CD4-positive, alpha-beta T cell (primary cell): ENCODE measurements at regions of chr9 and their contacts with region 1.

Region 1: DNA sequence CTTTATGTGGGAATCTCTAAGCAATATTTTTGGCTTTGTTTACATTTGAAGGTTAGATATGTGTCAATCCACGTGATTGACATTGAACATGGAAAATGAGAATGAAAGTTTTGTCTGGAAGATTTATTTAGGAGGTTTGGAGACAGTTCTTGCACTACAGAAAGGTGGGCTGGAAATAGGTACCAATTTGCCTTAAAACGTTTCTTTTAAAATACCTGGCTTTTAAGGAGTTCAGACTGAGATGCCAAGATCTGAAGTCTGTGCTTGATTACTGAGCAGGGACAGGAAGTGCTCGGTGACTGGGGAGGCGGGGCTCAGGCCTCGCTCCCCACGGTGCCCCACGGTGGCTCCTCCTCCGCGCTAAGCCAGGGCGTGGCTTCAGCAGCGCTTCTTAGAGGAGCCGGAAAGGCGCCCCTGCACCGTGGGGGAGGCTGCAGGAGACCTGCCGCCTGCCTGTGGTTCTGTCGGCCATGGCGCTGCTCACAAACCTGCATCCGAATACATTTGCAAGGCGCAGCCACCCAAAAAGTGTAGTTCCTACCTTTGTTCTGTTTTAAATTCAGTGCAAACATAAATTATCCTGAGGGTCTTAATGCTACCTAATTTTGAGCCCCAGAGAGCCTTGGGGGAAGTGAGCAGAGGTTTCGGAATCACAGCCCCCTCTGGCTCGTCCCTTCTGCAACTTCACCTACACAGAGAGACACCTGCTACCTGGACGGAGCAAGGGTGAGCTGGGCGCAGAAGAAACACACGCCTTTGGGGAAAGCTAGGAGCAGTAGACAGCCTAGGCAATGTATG is 49.2 kb downstream of the USP20 start:
- DNase-seq: peak; percentile 93 to 99 (median 97)
- ATAC-seq: peak; percentile 55
- H3K4me3 ChIP-seq: peak overlapping the region; percentile 69
- H3K4me3 Mint-ChIP-seq: peak overlapping the region; percentile 96
- H3K27ac ChIP-seq: peak overlapping the region; percentile 91 to 99
- H3K27ac Mint-ChIP-seq: peak overlapping the region; percentile 99
- H3K4me1 ChIP-seq: peaks cover 72% of the 10 kb centered on the region
- H3K4me1 Mint-ChIP-seq: peaks cover 53% of the 10 kb centered on the region
- H3K27me3 ChIP-seq: no peaks in the 10 kb centered on the region
- H3K27me3 Mint-ChIP-seq: no peaks in the 10 kb centered on the region
- CTCF ChIP-seq: peak; percentile 31

Region 2: DNA sequence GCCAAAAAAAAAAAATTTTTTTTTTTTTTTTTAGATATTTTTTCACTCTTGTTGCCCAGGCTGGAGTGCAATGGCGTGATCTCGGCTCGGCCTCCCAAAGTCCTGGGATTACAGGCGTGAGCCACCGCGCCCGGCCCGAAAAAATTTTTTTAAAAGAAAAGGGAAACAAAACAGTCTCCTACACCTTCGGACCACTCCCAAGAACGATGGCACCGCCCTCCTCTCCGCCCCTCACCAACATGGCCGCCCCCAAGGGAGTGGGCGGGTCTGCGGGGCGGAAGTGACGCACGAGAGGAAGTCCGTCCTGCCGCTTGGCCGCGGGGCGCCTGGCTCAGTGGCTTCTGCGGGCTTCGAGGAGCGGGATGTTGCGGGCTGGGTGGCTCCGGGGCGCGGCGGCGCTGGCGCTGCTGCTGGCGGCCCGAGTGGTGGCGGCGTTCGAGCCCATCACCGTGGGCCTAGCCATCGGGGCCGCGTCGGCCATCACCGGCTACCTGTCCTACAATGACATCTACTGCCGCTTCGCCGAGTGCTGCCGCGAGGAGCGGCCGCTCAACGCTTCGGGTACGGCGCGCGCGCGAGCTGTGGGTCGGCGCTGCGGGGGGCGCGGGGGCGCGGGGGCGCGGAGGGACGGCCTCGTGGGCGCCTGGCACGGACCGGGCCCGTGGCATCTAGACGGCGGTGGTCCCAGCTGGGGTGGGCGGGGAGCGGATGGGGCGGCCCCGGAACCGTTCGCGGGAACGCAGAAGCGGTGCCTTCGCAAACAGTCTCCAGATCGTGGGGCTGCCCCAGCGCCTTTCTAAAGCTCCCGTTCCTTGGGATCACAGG is 81.4 kb before region 1 on chr9 and contains the start of gene TOR1B:
- CTCF ChIA-PET with region 1: no interaction called
- POLR2A ChIA-PET with region 1: interaction called, 10 read pairs
- intact Hi-C with region 1: no loop called
- DNase-seq: peak; percentile 87 to 97 (median 94)
- ATAC-seq: peak; percentile 92
- H3K4me3 ChIP-seq: peak within 1 kb of the TSS; percentile 81
- H3K4me3 Mint-ChIP-seq: peak within 1 kb of the TSS; percentile 91
- H3K27ac ChIP-seq: peak within 1 kb of the TSS; percentile 49 to 77
- H3K27ac Mint-ChIP-seq: peak within 1 kb of the TSS; percentile 86
- H3K4me1 ChIP-seq: peaks cover 25% of the 10 kb centered on the region
- H3K4me1 Mint-ChIP-seq: peaks cover 24% of the 10 kb centered on the region
- H3K27me3 ChIP-seq: no peaks in the 10 kb centered on the region
- H3K27me3 Mint-ChIP-seq: no peaks in the 10 kb centered on the region
- CTCF ChIP-seq: no peak
- total RNA-seq, gene TOR1B: 13.4 to 15.1 TPM

Region 3: DNA sequence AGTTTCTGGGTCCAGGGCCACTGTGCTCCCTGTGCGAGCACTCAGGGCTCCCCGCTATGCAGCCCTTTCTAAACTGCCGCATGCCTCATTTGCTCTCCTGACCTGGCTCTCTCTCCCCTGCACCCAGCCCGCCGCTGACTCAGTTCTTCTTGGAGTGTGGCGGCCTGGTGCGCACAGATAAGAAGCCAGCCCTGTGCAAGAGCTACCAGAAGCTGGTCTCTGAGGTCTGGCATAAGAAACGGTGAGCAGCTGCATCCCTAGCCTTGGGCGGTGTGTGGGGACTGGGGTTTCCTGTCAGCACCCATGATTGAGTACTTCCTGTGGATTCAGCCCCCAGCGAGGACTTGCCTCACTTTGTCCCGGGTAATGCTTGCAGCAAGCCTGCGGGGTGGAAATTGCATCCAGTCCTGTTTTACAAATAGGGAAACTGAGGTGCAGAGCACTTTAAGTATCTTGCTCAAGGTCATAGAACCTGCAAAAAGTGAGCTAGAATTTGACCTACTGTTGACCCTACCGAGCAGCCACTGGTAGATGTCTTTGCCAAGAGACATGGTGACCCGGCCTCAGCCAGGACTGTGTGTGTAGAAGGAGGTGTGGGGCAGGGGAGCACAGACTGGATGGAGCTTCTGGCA is 21.2 kb before region 1 on chr9:
- CTCF ChIA-PET with region 1: interaction called, 10 read pairs
- POLR2A ChIA-PET with region 1: interaction called, 30 read pairs
- intact Hi-C with region 1: loop called (anchors 2 kb)
- DNase-seq: peak; percentile 39 to 83 (median 65)
- ATAC-seq: peak; percentile 63
- H3K4me3 ChIP-seq: no peak overlapping the region
- H3K4me3 Mint-ChIP-seq: peak overlapping the region; percentile 82
- H3K27ac ChIP-seq: peak overlapping the region in 1 of 2 donors; percentile 55
- H3K27ac Mint-ChIP-seq: peak overlapping the region; percentile 86
- H3K4me1 ChIP-seq: peaks cover 97% of the 10 kb centered on the region
- H3K4me1 Mint-ChIP-seq: peaks cover 68% of the 10 kb centered on the region
- H3K27me3 ChIP-seq: no peaks in the 10 kb centered on the region
- H3K27me3 Mint-ChIP-seq: no peaks in the 10 kb centered on the region
- CTCF ChIP-seq: no peak

Region 4: DNA sequence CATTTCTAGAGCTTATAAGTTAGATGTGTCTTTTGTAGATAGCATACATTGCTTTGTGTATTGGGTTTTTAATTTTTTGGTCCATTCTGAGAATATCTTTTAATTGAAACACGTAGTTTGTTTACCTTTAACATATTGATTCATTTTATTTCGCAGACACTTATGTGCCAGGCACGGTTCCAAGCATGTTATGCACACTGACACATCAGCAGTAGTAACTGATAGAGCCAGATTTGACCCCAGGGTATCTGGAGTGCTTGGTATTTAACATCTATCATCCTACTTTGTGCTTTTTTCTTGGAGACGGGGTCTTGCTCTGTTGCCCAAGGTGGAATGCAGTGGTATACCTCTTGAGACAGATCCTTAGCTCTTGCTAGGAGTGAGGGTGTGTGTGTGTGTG is 22.8 kb after region 1 on chr9:
- CTCF ChIA-PET with region 1: interaction called, 19 read pairs
- POLR2A ChIA-PET with region 1: interaction called, 64 read pairs
- intact Hi-C with region 1: no loop called
- DNase-seq: no peak
- ATAC-seq: no peak
- H3K4me3 ChIP-seq: no peak overlapping the region
- H3K4me3 Mint-ChIP-seq: no peak overlapping the region
- H3K27ac ChIP-seq: no peak overlapping the region
- H3K27ac Mint-ChIP-seq: peak overlapping the region; percentile 65
- H3K4me1 ChIP-seq: peaks cover 10% of the 10 kb centered on the region
- H3K4me1 Mint-ChIP-seq: peaks cover 47% of the 10 kb centered on the region
- H3K27me3 ChIP-seq: no peaks in the 10 kb centered on the region
- H3K27me3 Mint-ChIP-seq: no peaks in the 10 kb centered on the region
- CTCF ChIP-seq: no peak

Region 5: DNA sequence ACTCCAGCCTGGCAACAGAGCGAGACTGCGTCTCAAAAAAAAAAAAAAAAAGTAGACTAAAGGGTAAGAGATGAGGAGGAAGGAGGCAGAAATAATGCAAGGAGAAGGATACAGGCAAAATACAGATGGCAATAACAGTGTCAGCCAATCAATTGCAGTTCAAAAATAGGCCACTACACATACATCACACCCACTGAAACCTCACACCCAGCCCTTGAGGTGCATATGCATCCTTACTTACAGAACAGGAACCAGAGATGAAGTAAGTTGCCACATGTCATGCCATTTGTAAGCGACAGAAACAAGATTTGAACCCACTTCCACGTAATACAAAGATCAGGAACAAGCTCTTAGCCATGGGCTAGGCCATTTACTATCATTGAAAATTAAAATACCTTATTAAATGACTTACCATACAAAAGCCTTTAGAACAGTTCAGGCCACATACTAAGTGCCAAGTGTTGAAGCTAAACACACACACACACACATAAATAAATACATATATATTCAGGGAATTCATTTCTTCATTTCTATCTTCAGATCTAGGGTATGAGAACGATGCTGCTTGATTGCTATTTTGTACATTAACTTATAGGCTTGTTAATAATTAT is 60.2 kb after region 1 on chr9:
- CTCF ChIA-PET with region 1: interaction called, 5 read pairs
- POLR2A ChIA-PET with region 1: interaction called, 43 read pairs
- intact Hi-C with region 1: loop called in 1 of 2 experiments (anchors 1 kb)
- DNase-seq: peak in 13 of 14 experiments; percentile 22 to 92 (median 33)
- ATAC-seq: peak; percentile 90
- H3K4me3 ChIP-seq: no peak overlapping the region
- H3K4me3 Mint-ChIP-seq: peak overlapping the region; percentile 56
- H3K27ac ChIP-seq: peak overlapping the region; percentile 12 to 58
- H3K27ac Mint-ChIP-seq: peak overlapping the region; percentile 76
- H3K4me1 ChIP-seq: peaks cover 46% of the 10 kb centered on the region
- H3K4me1 Mint-ChIP-seq: peaks cover 67% of the 10 kb centered on the region
- H3K27me3 ChIP-seq: no peaks in the 10 kb centered on the region
- H3K27me3 Mint-ChIP-seq: no peaks in the 10 kb centered on the region
- CTCF ChIP-seq: no peak

Region 6: DNA sequence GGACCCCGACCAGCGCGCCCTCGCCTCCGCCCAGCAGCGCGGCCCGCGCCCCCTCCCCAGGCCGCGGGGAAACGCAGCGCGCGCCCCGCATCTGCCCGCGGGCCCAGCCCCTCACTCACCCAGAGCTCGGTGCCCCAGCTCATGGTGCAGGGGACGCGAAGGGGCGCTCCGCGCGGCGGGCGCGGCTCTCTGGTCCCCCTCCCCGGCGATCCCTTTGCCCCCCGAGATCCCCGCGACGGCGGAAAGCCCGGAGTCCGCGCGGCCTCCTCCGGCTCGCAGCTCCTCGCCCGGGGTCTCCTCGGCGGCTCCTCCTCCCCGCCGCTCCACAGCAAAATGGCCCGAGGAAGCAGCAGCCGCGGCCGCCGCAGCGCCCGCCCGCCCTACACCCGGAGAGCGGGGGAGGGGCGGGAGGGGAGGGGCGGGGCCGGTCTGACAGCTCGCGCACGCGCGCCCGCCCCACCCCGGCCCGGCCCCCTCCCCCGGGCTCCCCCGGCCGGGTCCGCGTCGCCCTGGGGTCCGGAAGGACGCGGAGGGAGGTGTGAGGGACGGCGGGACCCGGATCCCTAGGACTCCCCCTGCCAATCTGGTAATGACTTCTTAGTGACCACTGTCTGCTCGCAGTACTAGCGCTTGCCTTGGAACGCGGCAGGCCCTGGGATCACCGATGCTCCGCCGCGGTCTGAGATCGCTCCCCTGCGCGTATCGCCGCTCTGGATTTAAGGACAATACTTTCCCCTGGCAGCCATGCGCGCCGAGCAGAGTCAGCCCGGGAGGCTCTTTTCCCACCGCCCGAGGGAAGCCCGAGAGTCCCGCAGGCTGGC is 158.6 kb after region 1 on chr9 and contains the start of gene FNBP1:
- CTCF ChIA-PET with region 1: interaction called, 5 read pairs
- POLR2A ChIA-PET with region 1: interaction called, 206 read pairs
- intact Hi-C with region 1: loop called (anchors 2 kb)
- DNase-seq: peak; percentile 69 to 93 (median 80)
- ATAC-seq: peak; percentile 66
- H3K4me3 ChIP-seq: peak within 1 kb of the TSS; percentile 93
- H3K4me3 Mint-ChIP-seq: peak within 1 kb of the TSS; percentile 100
- H3K27ac ChIP-seq: peak within 1 kb of the TSS; percentile 84 to 88
- H3K27ac Mint-ChIP-seq: peak within 1 kb of the TSS; percentile 99
- H3K4me1 ChIP-seq: peaks cover 31% of the 10 kb centered on the region
- H3K4me1 Mint-ChIP-seq: peaks cover 72% of the 10 kb centered on the region
- H3K27me3 ChIP-seq: no peaks in the 10 kb centered on the region
- H3K27me3 Mint-ChIP-seq: no peaks in the 10 kb centered on the region
- CTCF ChIP-seq: no peak
- total RNA-seq, gene FNBP1: 166 to 181 TPM

Region 7: GRCh38 chr9:130368631-130369103 is 484.2 kb after region 1 on chr9:
- CTCF ChIA-PET with region 1: no interaction called
- POLR2A ChIA-PET with region 1: no interaction called
- intact Hi-C with region 1: no loop called
- DNase-seq: peak in 1 of 14 experiments; percentile 2
- ATAC-seq: no peak
- H3K4me3 ChIP-seq: no peak overlapping the region
- H3K4me3 Mint-ChIP-seq: no peak overlapping the region
- H3K27ac ChIP-seq: no peak overlapping the region
- H3K27ac Mint-ChIP-seq: no peak overlapping the region
- H3K4me1 ChIP-seq: no peaks in the 10 kb centered on the region
- H3K4me1 Mint-ChIP-seq: peaks cover 6% of the 10 kb centered on the region
- H3K27me3 ChIP-seq: no peaks in the 10 kb centered on the region
- H3K27me3 Mint-ChIP-seq: no peaks in the 10 kb centered on the region
- CTCF ChIP-seq: no peak